ENCODE measurements at regions of chr19 and their contacts with region 1.

Region 1: GRCh38 chr19:2236314-2237050 is at the starts of genes PLEKHJ1 and SF3A2:
- DNase-seq: peak; percentile 97 to 99
- H3K4me3 ChIP-seq: peak within 1 kb of the TSS; percentile 74 to 99 (median 91)
- H3K27ac ChIP-seq: peak within 1 kb of the TSS; percentile 92 to 99 (median 99)
- H3K4me1 ChIP-seq: peaks cover 60 to 86% (median 82%) of the 10 kb centered on the region in 4 donors
- H3K27me3 ChIP-seq: no peaks in the 10 kb centered on the region
- CTCF ChIP-seq: peak in 6 of 7 experiments; percentile 3 to 99 (median 98)
- EP300 ChIP-seq: no peak
- POLR2A ChIP-seq: peak in 2 of 4 donors; percentile 37 to 48
- total RNA-seq, gene PLEKHJ1: 22.2 to 459 (median 96.9) TPM
- total RNA-seq, gene SF3A2: 25.8 to 214 (median 33.9) TPM

Region 2: DNA sequence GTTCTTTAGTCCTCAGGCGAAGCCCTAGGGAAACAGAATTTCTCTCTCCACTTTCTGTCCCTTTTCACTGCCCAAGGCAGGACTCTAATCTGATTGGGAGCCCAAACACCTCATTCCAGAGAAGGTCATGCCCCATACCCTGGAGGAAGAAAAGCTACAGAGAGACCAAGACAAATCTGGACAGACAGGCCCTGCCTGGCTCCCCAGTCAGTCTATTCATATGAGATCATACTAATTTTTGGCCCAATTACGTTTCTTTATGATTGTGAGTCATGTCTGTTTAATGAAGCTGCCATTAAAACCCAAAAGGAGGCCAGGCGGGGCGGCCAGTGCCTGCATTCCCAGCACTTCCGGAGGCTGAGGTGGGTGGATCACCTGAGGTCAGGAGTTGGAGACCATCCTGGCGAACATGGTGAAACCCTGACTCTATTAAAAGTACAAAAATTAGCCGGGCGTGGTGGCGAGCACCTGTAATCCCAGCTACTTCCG is 81.9 kb before region 1 on chr19:
- intact Hi-C with region 1: loop called (anchors 5 kb)
- DNase-seq: no peak
- H3K4me3 ChIP-seq: no peak overlapping the region
- H3K27ac ChIP-seq: no peak overlapping the region
- H3K4me1 ChIP-seq: peaks cover 15 to 29% (median 19%) of the 10 kb centered on the region in 4 donors
- H3K27me3 ChIP-seq: no peaks in the 10 kb centered on the region
- CTCF ChIP-seq: no peak
- EP300 ChIP-seq: no peak
- POLR2A ChIP-seq: no peak

Region 3: GRCh38 chr19:2171349-2172145 is 64.9 kb before region 1 on chr19:
- intact Hi-C with region 1: loop called (anchors 5 kb)
- DNase-seq: peak; percentile 39 to 84
- H3K4me3 ChIP-seq: peak overlapping the region in 1 of 4 donors; percentile 16
- H3K27ac ChIP-seq: peak overlapping the region; percentile 78 to 99 (median 97)
- H3K4me1 ChIP-seq: peaks cover 61 to 87% (median 76%) of the 10 kb centered on the region in 4 donors
- H3K27me3 ChIP-seq: no peaks in the 10 kb centered on the region
- CTCF ChIP-seq: no peak
- EP300 ChIP-seq: no peak
- POLR2A ChIP-seq: no peak

Region 4: DNA sequence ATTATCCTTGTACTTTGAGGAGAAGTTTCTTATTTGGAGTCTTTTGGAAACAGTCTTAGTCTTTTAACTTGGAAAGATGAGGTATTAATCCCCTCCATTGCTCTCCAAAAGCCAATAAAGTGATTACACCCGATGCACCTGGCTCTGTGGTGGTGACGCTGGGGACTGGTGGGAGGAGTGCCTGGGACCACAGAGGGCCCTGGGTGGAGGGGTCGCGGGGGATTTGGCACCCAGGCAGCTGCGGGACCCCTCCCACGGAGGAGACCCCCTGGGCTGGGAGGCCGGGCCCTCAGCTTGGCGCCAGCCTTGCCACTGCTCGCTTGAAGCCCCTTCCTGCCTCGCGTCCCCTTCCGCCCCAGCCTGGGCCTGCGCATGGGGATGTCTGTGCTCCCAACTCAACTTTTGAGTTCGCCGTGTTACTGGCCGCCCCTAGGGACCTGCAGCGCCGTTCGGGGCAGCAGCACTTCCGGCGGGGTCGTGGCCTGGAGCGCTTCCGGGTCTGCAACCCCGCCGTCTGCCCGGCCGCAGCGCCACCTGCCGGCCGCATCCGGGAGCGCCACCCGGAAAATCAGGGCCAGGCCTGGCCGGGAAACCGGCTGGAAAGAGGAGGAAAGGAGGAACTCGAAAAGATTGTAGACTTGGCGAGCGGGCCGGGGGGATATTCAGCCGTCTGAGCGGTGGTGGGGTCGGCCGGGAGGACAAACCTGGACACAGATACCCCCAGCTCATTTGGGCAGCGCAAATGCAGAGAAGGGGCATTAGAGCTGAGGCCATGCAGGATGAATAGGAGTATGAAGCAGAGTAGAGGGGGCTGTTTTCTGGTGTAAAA is 37.1 kb after region 1 on chr19:
- intact Hi-C with region 1: loop called (anchors 5 kb)
- DNase-seq: peak; percentile 83 to 93
- H3K4me3 ChIP-seq: peak overlapping the region; percentile 18 to 99 (median 58)
- H3K27ac ChIP-seq: peak overlapping the region; percentile 70 to 99 (median 98)
- H3K4me1 ChIP-seq: peaks cover 48 to 70% (median 60%) of the 10 kb centered on the region in 4 donors
- H3K27me3 ChIP-seq: no peaks in the 10 kb centered on the region
- CTCF ChIP-seq: peak in 6 of 7 experiments; percentile 29 to 99 (median 97)
- EP300 ChIP-seq: no peak
- POLR2A ChIP-seq: no peak

Region 5: DNA sequence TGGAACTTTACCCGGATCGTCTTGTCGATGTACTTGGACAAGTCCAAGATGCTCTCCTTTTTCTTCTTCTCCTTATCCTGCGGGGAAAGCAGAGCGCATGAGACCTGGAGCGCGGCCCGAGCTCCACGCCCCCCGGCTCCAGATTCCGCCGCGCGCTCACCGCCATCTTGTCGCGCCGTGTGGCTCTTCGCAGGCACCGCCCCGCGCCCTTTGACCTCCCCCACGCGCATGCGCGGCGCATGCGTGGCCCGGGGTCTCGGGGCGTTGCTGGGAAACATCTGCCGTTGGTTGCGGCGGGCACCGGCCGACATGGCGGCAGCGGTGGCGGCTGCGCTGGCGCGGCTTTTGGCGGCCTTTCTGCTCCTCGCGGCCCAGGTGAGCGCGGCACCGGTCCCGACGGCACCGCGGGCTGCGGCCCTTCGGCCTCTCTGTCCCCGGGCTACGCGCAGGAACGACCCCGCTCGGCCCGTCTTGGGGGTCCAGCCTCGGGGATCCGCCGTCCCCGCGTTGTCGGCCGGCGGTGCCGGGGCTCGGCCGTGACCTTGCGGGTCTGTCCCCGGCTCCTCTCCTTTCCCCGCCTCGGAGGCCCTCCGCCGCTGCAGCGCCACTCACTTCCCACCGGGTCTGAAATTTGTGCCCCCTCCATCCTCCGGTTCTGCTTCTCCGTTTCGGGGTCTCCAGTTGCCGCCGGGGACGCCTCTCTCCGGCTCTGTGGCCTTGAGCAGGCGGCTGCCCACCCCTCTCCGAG is 92.1 kb after region 1 on chr19 and contains the starts of genes LSM7 and SPPL2B:
- intact Hi-C with region 1: loop called (anchors 10 kb)
- DNase-seq: peak; percentile 93 to 98
- H3K4me3 ChIP-seq: peak within 1 kb of the TSS; percentile 88 to 98 (median 93)
- H3K27ac ChIP-seq: peak within 1 kb of the TSS; percentile 80 to 92 (median 86)
- H3K4me1 ChIP-seq: peaks cover 48 to 78% (median 66%) of the 10 kb centered on the region in 4 donors
- H3K27me3 ChIP-seq: no peaks in the 10 kb centered on the region
- CTCF ChIP-seq: no peak
- EP300 ChIP-seq: no peak
- POLR2A ChIP-seq: no peak
- total RNA-seq, gene LSM7: 9.8 to 93.1 (median 17.4) TPM
- total RNA-seq, gene SPPL2B: 69.3 to 450 (median 97.4) TPM

Region 6: DNA sequence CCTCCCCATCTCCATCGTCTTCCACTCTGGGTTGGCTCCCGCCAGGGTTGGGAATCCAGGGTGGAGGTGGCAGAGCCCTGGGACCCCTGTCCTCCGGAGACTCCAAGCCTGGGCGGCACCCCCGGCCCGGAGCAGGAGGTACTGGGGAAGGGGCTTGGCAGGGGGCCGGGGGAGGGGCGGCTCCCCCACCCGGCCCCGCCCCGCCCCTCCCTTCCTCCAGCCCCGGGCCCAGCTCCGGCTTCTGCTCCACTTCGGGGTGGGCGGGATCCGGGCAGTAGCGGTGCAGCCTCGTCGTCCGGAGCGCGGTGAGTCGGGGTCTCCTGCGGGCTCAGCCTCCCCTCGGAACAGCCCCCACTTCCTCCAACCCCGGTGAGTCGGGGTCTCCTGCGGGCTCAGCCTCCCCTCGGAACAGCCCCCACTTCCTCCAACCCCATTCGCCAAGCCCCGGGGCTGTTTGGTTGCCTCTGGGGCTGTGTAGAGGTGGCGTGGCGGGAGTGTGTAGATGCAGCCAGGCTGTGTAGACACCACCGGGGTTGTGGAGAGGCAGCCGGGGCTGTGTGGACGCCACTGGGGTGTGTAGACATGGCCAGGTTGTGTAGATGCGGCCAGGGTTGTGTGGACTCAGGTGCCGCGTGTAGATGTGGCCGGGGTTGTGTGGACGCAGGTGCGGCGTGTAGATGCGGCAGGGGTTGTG is 123.7 kb after region 1 on chr19 and contains the start of gene TMPRSS9:
- intact Hi-C with region 1: no loop called
- DNase-seq: no peak
- H3K4me3 ChIP-seq: no peak within 1 kb of the TSS
- H3K27ac ChIP-seq: no peak within 1 kb of the TSS
- H3K4me1 ChIP-seq: peaks cover 0 to 11% (median 4%) of the 10 kb centered on the region in 4 donors
- H3K27me3 ChIP-seq: peaks cover 0 to 69% (median 36%) of the 10 kb centered on the region in 3 donors
- CTCF ChIP-seq: no peak
- EP300 ChIP-seq: no peak
- POLR2A ChIP-seq: no peak
- total RNA-seq, gene TMPRSS9: 1.1 TPM in 1 of 5 donors, not detected in the others

Measured in stomach (tissue), 19 donors.